ENCODE measurements at regions of chr2 and their contacts with region 1.

Region 1: DNA sequence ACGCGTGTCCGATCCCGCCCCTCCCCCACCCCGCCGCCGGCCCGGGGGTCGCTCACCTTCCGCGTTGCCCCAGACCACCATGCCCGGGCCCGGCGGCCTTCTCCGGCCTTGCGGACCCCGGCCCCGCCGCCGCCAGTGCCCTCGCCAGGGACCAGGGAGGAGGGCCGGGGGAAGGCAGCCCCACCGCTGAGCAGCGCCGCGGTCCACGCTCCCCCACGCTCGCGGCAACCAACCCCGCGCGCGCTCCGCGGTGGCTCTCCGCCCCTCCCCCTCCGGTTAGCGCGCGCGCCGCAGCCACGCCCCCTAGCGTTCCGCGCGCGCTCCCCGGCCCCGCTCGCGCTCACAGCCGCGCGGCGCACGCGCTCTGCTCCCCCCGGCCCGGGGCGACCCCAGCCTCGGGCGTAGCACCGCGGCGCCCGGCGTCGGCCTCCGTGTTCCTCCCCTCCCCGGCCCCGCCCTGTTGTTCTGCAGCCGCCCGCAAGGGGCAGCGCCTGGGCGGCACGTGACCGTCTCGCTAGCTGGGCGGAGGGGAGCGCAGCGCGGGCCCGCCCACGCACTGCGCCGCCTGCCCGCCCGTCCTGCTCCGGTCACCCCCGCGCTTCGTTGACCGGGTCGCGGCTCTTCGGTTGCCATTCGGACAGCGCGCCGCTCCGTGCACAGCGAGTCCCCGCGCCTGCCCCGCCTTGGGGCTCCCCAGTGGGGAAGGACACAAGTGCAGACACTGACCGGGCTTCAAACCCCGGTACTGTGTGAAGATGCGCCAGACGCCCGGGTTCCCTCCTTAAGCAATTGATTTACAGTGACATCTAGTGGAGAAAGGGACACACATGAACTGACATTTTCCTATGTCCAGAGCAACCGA is at the start of gene REV1:
- DNase-seq: peak; percentile 94
- H3K4me3 Mint-ChIP-seq: peak within 1 kb of the TSS; percentile 87
- H3K27ac Mint-ChIP-seq: peak within 1 kb of the TSS; percentile 92
- H3K4me1 Mint-ChIP-seq: peaks cover 37% of the 10 kb centered on the region
- H3K27me3 Mint-ChIP-seq: no peaks in the 10 kb centered on the region
- total RNA-seq, gene REV1: 29.6 to 32.3 TPM

Region 2: GRCh38 chr2:98936353-98937351 is 553.3 kb before region 1 on chr2:
- CTCF ChIA-PET with region 1: no interaction called
- intact Hi-C with region 1: loop called (anchors 5 kb)
- DNase-seq: peak; percentile 59
- H3K4me3 Mint-ChIP-seq: peak overlapping the region; percentile 69
- H3K27ac Mint-ChIP-seq: no peak overlapping the region
- H3K4me1 Mint-ChIP-seq: peaks cover 8% of the 10 kb centered on the region
- H3K27me3 Mint-ChIP-seq: peaks cover 41% of the 10 kb centered on the region

Region 3: GRCh38 chr2:99085421-99085820 is 404.6 kb before region 1 on chr2:
- CTCF ChIA-PET with region 1: no interaction called
- intact Hi-C with region 1: loop called (anchors 2 kb)
- DNase-seq: peak; percentile 32
- H3K4me3 Mint-ChIP-seq: no peak overlapping the region
- H3K27ac Mint-ChIP-seq: no peak overlapping the region
- H3K4me1 Mint-ChIP-seq: peaks cover 5% of the 10 kb centered on the region
- H3K27me3 Mint-ChIP-seq: peaks cover 3% of the 10 kb centered on the region

Region 4: DNA sequence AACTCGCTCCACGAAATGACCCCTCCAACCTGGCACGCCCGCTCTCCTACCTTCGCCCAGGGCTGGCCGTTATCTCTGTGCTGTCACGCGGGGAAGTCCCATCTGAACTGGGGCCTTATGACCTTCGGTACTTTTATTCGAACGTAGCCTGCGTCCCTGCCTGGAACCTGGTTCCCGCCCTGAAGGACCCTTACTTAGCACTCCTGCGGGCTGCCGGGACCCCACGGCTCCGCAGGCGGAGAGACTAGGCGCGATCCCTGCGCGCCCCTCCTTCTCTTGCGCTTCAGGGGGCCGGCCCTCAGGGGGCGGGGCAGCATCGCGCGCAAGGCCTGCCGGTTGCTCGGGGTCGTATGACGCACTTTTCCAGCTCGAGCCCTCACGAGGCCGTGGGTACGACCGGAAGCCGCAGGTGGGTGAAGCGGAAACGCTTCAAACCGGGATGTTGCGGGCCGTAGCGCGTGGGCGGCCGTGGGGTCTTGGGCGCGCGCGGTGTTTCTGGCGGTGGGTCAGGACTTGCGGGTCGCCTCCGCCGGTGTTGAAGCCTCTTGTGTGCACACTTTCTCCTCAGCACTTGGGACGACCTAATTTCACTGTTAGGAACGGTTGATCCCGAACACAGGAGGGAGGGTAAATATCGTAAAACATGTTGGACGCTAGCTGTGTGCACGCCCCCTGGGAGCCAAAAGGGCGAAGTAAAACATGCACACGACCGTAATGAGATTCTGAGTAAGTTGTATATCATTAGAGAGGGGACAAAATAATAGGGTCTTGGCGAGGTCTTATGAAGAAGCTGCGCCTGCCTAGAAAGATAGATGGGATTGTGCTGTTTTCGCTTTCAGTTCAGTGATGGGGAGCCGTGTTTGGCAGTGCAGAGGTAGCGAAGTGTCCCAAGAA is 335.1 kb before region 1 on chr2 and contains the starts of genes LIPT1 and TSGA10:
- CTCF ChIA-PET with region 1: interaction called, 3 read pairs
- intact Hi-C with region 1: loop called (anchors 1 kb)
- DNase-seq: peak; percentile 95
- H3K4me3 Mint-ChIP-seq: no peak within 1 kb of the TSS
- H3K27ac Mint-ChIP-seq: no peak within 1 kb of the TSS
- H3K4me1 Mint-ChIP-seq: peaks cover 39% of the 10 kb centered on the region
- H3K27me3 Mint-ChIP-seq: no peaks in the 10 kb centered on the region
- total RNA-seq, gene LIPT1: 7.0 to 8.1 TPM
- total RNA-seq, gene TSGA10: 7.2 to 8.9 TPM

Region 5: DNA sequence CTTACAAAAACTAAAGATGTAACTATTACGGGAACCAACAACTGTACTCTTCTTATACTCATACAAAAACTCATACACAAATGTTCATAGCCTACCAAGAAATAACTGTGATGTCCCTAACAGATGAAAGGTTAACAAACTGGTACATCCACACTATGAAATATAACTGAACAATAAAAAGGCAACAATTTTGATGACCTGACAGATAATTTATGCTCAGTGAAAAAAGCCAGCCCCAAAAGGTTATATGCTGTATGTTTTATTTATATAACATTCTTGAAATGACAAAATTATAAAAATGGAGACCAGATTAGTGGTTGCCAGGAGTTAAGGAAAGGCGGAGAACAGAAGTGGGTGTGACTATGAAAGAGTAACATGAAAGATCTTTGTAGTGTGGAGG is 31.5 kb before region 1 on chr2:
- CTCF ChIA-PET with region 1: no interaction called
- intact Hi-C with region 1: no loop called
- DNase-seq: no peak
- H3K4me3 Mint-ChIP-seq: no peak overlapping the region
- H3K27ac Mint-ChIP-seq: no peak overlapping the region
- H3K4me1 Mint-ChIP-seq: no peaks in the 10 kb centered on the region
- H3K27me3 Mint-ChIP-seq: no peaks in the 10 kb centered on the region

Region 6: GRCh38 chr2:99615247-99615771 is 125.3 kb after region 1 on chr2:
- CTCF ChIA-PET with region 1: no interaction called
- intact Hi-C with region 1: no loop called
- DNase-seq: no peak
- H3K4me3 Mint-ChIP-seq: no peak overlapping the region
- H3K27ac Mint-ChIP-seq: no peak overlapping the region
- H3K4me1 Mint-ChIP-seq: no peaks in the 10 kb centered on the region
- H3K27me3 Mint-ChIP-seq: no peaks in the 10 kb centered on the region

Measured in activated naive CD4-positive, alpha-beta T cell treated with anti-CD3 and anti-CD28 coated beads for 36 hours (primary cell).